Mammary epithelial cell (primary cell): ENCODE measurements at regions of chr19 and their contacts with region 1.

Region 1: DNA sequence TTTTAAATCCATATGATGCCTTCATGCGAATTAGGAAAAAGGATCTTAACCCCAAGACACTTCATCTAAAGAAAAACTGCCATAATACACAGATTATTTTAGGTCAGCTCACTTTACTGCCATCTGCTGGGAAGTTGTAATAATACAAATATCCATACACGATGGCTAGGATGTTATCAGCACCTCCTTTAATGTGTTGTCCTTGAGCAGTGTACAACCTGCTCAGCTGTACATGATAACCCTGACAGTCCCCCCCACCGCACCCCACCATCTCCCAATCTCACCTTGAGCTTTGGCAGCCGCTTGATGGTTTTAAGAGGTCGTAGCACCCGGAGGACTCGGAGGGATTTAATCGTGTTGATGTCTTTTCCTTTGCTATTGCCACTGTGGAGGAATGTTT is 112.2 kb downstream of the IER2 start:
- DNase-seq: peak; percentile 48
- H3K4me3 ChIP-seq: no peak overlapping the region
- H3K27ac ChIP-seq: no peak overlapping the region
- H3K4me1 ChIP-seq: peaks cover 16% of the 10 kb centered on the region
- H3K27me3 ChIP-seq: peaks cover 2% of the 10 kb centered on the region
- CTCF ChIP-seq: peak; percentile 49 to 53

Region 2: DNA sequence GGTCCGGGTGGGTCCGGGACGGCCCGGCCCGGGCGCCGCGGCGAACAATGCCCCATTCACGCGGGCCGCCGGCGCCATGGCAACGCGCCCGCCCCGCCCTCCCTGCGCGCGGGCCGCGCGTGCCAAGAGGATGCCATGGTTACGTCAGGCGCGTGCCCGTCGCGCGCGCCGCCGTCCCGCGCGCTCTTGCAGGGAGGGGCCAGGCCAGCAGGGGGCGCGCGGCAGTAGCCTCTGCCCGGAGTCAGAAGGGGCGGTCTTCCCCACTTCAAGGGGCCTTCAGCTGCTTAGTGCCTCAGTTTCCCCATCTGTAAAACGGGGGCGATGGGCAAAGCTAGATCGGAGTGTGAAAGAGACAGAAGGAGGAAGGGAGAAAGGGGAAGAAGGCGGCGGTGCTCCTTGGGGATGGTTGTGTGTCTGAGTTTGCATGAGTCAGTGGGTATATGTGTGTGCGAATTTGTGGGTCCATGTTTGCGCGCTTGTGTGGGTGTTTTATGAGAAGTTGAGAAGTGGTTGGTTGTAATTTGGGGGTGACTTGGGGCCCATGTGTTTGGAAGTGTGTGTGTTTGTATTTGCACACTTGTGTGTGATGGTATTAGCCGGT is 278.8 kb before region 1 on chr19:
- CTCF ChIA-PET with region 1: no interaction called
- dilution Hi-C with region 1: no loop called
- in situ Hi-C with region 1: loop called (anchors 10 kb)
- intact Hi-C with region 1: loop called (anchors 1 kb)
- DNase-seq: peak; percentile 73
- H3K4me3 ChIP-seq: peak overlapping the region in 1 of 3 experiments; percentile 34
- H3K27ac ChIP-seq: peak overlapping the region; percentile 50
- H3K4me1 ChIP-seq: peaks cover 5% of the 10 kb centered on the region
- H3K27me3 ChIP-seq: no peaks in the 10 kb centered on the region
- CTCF ChIP-seq: peak; percentile 73 to 91

Region 3: DNA sequence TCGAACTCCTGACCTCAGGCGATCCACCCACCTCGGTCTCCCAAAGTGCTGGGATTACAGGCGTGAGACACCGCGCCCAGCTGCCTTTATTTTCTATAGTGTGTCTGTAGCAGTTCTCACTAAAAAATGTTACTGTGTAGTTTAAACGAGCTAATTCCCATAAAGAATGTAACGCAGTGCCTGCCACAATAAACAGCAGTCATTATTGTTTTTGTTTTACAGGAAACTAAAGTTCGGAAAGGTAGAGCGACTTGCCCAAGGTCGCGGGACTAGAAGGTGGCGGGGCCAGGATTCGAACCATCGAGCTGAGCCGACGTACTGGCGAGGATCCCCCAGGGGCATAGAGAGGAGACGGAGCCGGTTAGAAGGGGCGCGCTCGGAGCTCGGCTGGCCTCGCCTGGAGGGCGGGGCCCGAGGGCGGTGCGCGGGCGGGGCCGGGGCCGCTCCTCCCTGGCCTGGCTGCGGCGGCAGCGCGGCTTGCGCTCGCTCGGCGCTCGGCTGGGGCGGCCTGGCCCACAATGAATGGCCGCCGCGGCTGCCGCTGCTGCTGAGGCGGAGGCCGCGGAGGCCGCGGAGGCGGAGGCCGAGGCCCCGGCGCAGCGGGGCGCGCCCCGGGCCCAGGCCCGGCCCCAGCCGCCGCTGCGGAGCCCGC is 144.6 kb before region 1 on chr19 and contains the start of gene NACC1:
- CTCF ChIA-PET with region 1: no interaction called
- dilution Hi-C with region 1: no loop called
- in situ Hi-C with region 1: no loop called
- intact Hi-C with region 1: loop called (anchors 10 kb)
- DNase-seq: peak; percentile 85
- H3K4me3 ChIP-seq: peak within 1 kb of the TSS; percentile 90 to 100 (median 99)
- H3K27ac ChIP-seq: peak within 1 kb of the TSS; percentile 51
- H3K4me1 ChIP-seq: peaks cover 26% of the 10 kb centered on the region
- H3K27me3 ChIP-seq: no peaks in the 10 kb centered on the region
- CTCF ChIP-seq: no peak
- total RNA-seq, gene NACC1: 76.2 to 106 TPM

Region 4: DNA sequence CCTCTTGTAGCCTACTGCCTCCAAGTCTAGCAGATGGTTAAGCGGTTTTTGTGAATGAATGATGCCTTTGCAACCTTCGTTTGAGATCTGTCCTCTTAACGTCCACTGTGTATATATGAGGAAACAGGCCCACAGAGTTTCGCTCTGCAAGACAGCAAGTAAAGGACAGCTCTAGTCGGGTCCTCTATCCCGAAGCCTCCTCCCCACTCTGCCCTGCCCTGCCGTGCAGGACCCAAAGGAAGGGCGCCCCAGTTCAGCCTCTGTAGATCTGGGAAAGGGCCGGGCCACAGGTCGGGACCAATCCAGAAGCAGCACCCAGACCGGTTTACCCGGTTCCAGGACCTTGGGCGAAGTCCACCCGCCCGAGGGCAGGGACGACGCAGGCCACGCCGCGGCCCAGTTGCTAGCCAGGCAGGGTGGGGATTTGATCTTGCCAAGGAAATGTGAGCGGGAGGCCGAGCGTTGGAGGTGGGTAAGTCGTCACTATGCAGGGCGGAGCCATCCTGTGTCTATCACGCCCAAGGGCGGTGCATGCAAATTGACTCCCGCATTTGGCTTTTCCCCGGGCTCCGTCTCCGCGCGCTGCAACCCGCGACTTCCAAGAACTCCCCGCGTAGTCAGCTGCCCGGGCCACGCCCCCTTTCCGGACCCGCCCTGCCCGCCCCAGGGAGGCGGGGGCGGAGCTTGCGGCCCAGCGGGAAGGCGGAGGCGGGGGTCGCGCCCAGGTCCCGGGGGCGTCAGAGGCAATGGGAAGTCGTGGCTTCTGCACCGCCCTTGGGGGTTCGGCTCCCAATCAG is 99.7 kb before region 1 on chr19:
- CTCF ChIA-PET with region 1: no interaction called
- dilution Hi-C with region 1: no loop called
- in situ Hi-C with region 1: no loop called
- intact Hi-C with region 1: no loop called
- DNase-seq: peak; percentile 97
- H3K4me3 ChIP-seq: peak overlapping the region; percentile 3 to 36 (median 33)
- H3K27ac ChIP-seq: peak overlapping the region; percentile 82
- H3K4me1 ChIP-seq: peaks cover 51% of the 10 kb centered on the region
- H3K27me3 ChIP-seq: no peaks in the 10 kb centered on the region
- CTCF ChIP-seq: no peak

Region 5: GRCh38 chr19:13195678-13196077 is 66.8 kb before region 1 on chr19:
- CTCF ChIA-PET with region 1: no interaction called
- dilution Hi-C with region 1: no loop called
- in situ Hi-C with region 1: no loop called
- intact Hi-C with region 1: loop called (anchors 1 kb)
- DNase-seq: no peak
- H3K4me3 ChIP-seq: no peak overlapping the region
- H3K27ac ChIP-seq: no peak overlapping the region
- H3K4me1 ChIP-seq: no peaks in the 10 kb centered on the region
- H3K27me3 ChIP-seq: no peaks in the 10 kb centered on the region
- CTCF ChIP-seq: no peak

Region 6: GRCh38 chr19:13574933-13575332 is 312.5 kb after region 1 on chr19:
- CTCF ChIA-PET with region 1: no interaction called
- dilution Hi-C with region 1: no loop called
- in situ Hi-C with region 1: no loop called
- intact Hi-C with region 1: no loop called
- DNase-seq: no peak
- H3K4me3 ChIP-seq: no peak overlapping the region
- H3K27ac ChIP-seq: no peak overlapping the region
- H3K4me1 ChIP-seq: no peaks in the 10 kb centered on the region
- H3K27me3 ChIP-seq: no peaks in the 10 kb centered on the region
- CTCF ChIP-seq: no peak